ENCODE measurements at regions of chr16 and their contacts with region 1.

Region 1: DNA sequence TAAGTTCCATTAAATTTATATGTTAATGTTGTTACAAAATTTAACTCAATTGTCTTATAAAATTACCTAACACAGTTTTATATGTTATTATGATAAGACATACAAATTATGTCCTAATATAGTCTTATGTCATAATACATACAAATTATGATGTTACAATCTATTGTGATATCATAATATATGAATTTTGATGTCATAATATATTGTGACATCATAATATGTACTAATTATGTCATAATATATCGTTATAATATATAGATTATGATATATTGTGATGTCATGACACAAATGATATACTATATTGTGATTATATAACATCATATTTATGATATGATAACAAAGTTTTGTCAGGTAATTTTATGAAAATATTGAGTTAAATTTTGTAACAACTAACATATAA is 1789.6 kb downstream of the TP53TG3F start:
- DNase-seq: no peak
- ATAC-seq: no peak
- H3K4me3 ChIP-seq: no peak overlapping the region
- H3K27ac ChIP-seq: no peak overlapping the region
- H3K4me1 ChIP-seq: no peaks in the 10 kb centered on the region
- H3K27me3 ChIP-seq: no peaks in the 10 kb centered on the region
- CTCF ChIP-seq: no peak

Region 2: GRCh38 chr16:35298460-35299243 is 49.6 kb after region 1 on chr16:
- intact Hi-C with region 1: loop called in 2 of 10 experiments (anchors 10 kb)
- DNase-seq: no peak
- ATAC-seq: no peak
- H3K4me3 ChIP-seq: no peak overlapping the region
- H3K27ac ChIP-seq: no peak overlapping the region
- H3K4me1 ChIP-seq: no peaks in the 10 kb centered on the region
- H3K27me3 ChIP-seq: no peaks in the 10 kb centered on the region
- CTCF ChIP-seq: no peak

Region 3: DNA sequence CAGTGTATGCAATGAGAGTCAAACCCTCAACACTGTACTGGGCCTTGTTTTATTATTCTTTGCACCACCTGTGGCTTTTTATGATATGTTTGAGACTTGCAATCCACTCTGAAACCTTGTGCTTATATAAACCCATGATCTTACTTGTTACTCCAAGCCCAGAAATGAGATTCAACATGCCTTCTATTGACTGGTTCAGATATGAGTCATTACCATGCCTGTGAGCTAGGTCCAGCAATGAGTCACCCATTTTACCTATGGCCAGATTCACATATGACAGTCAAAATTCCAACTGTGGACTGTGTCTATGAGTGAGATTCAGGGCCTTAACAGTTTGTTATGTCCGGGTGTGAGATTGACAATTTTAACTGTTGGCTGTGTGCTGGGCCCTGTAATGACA is 56.4 kb after region 1 on chr16:
- intact Hi-C with region 1: loop called in 1 of 10 experiments (anchors 10 kb)
- DNase-seq: no peak
- ATAC-seq: no peak
- H3K4me3 ChIP-seq: no peak overlapping the region
- H3K27ac ChIP-seq: no peak overlapping the region
- H3K4me1 ChIP-seq: no peaks in the 10 kb centered on the region
- H3K27me3 ChIP-seq: no peaks in the 10 kb centered on the region
- CTCF ChIP-seq: no peak

Measured in heart right ventricle (tissue), 16 donors.